A673 (cell line): ENCODE measurements at regions of chr12 and their contacts with region 1.

Region 1: DNA sequence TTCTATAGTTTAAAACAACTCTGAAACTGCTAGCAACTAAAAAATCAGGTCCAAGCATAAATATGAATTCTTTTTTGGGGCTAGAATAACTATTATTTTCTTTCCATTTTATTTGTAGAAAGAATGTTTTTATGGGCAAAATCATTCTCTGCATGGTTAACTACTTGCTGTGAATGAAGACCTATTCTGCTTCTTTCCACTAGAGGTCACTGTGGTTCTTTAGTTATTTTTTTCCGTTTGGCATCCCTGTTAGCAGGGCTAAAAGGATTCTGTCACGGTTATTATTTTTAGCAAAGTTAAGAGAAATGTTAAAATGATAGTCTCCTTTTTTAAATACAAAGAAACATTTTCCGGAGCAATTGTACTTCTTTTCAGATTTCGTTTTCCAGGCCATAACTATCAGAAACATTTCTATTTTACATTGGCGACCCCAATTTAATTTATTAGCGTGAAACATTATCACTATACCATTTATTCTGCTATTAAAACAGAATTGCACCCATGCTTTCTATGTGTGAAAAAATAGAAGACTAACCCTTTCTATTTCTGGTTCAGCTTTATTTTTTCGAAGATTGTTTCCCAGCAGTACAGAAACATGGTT is 404.8 kb downstream of the ATP23 start:
- DNase-seq: peak; percentile 74
- H3K4me3 ChIP-seq: no peak overlapping the region
- H3K27ac ChIP-seq: no peak overlapping the region
- H3K4me1 ChIP-seq: peaks cover 25% of the 10 kb centered on the region
- H3K27me3 ChIP-seq: no peaks in the 10 kb centered on the region
- CTCF ChIP-seq: peak; percentile 81

Region 2: DNA sequence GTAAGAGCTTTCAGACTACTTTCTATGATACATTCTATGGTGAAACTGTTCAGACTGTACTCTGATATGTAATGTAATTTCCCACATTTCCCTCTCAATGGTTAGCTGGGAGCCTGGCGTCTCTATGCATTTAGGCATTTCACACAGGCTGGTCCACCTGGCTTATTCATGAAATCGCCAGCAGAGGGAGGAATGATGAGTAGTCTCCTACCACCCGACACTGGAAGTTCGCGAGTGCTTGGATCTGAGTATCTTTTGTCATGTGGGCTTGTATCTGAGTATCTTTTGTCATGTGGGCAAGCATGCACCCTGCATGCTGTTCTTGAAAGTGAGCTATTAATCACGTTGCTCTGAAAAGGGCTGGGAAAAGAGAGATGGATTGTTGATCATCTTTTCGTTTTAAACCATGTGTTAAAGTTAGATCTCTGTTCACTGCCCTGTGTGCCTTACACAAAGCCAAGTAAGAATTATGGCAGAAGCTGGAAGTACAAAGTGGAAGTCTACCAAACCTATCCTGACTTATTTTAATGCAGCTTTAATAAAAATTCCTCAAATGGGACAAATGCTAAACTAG is 169.7 kb before region 1 on chr12:
- CTCF ChIA-PET with region 1: no interaction called
- POLR2A ChIA-PET with region 1: no interaction called
- intact Hi-C with region 1: loop called (anchors 10 kb)
- DNase-seq: peak; percentile 78
- H3K4me3 ChIP-seq: no peak overlapping the region
- H3K27ac ChIP-seq: no peak overlapping the region
- H3K4me1 ChIP-seq: no peaks in the 10 kb centered on the region
- H3K27me3 ChIP-seq: no peaks in the 10 kb centered on the region
- CTCF ChIP-seq: peak; percentile 74

Region 3: GRCh38 chr12:58443273-58443980 is 97.3 kb after region 1 on chr12:
- CTCF ChIA-PET with region 1: no interaction called
- POLR2A ChIA-PET with region 1: no interaction called
- intact Hi-C with region 1: loop called (anchors 1 kb)
- DNase-seq: peak; percentile 57
- H3K4me3 ChIP-seq: no peak overlapping the region
- H3K27ac ChIP-seq: no peak overlapping the region
- H3K4me1 ChIP-seq: no peaks in the 10 kb centered on the region
- H3K27me3 ChIP-seq: no peaks in the 10 kb centered on the region
- CTCF ChIP-seq: peak; percentile 76

Region 4: GRCh38 chr12:59087077-59087673 is 741.0 kb after region 1 on chr12:
- CTCF ChIA-PET with region 1: no interaction called
- POLR2A ChIA-PET with region 1: no interaction called
- intact Hi-C with region 1: loop called (anchors 5 kb)
- DNase-seq: no peak
- H3K4me3 ChIP-seq: no peak overlapping the region
- H3K27ac ChIP-seq: no peak overlapping the region
- H3K4me1 ChIP-seq: peaks cover 18% of the 10 kb centered on the region
- H3K27me3 ChIP-seq: no peaks in the 10 kb centered on the region
- CTCF ChIP-seq: peak; percentile 54

Region 5: DNA sequence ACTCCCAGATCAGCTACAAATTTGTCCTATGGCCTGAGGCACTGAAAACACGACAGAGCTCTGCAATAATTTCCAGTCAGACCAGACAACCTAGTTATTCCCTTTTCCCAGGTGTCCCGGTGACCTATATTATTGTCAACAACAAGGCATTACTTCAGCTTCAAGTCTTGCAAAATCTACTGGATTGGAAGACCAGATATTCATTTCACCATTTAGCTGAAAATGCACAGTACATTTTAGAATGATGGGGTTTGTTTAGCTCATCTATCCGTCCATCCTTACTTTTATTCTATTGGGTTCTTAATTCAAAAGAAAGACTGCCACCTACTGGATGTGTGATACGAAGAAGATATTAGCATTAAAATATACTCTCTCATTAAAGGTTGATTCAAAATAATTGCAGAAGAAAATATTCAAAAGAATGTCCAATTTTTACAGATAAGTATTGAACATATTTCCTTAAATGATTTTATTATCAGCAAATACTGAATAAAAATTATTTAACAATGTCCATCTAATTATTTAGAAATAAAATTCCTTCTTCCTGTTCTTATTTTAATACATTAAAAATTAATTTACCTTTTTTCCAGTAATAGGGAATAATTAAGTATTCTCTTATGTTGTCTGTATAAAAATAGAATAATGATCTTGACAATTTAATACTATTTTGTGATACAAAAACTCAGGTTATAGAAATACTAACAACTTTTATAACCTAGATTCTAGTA is 819.0 kb after region 1 on chr12:
- CTCF ChIA-PET with region 1: no interaction called
- POLR2A ChIA-PET with region 1: no interaction called
- intact Hi-C with region 1: loop called (anchors 5 kb)
- DNase-seq: peak; percentile 60
- H3K4me3 ChIP-seq: no peak overlapping the region
- H3K27ac ChIP-seq: no peak overlapping the region
- H3K4me1 ChIP-seq: no peaks in the 10 kb centered on the region
- H3K27me3 ChIP-seq: no peaks in the 10 kb centered on the region
- CTCF ChIP-seq: peak; percentile 66